Left cardiac atrium (tissue), 4 donors: ENCODE measurements at regions of chr1 and their contacts with region 1.

Region 1: DNA sequence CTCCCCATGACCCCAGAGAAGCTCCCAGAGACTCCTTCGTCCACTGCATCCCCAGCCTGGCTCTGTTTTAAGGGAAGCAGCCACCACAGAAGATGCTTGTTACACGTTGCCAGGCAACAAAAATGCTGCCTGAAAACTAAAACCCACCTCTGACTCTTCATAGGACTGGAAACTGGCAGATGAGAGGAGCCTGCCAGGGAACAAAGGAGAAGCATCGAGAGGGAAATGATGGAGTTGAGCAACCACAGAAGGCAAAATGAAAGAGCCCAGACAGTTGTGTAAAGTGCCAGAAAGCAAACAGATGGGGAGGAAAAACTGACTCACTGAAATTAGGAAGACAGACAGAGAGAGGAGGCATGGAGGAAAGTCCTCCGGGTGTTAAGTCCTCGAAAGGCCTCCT is 118.4 kb downstream of the KCNN3 start:
- DNase-seq: no peak
- ATAC-seq: peak; percentile 54 to 62

Region 2: GRCh38 chr1:154695985-154696384 is 55.7 kb before region 1 on chr1:
- intact Hi-C with region 1: loop called in 1 of 2 experiments (anchors 10 kb)
- DNase-seq: no peak
- ATAC-seq: no peak